ENCODE measurements at regions of chrX and their contacts with region 1.

Region 1: DNA sequence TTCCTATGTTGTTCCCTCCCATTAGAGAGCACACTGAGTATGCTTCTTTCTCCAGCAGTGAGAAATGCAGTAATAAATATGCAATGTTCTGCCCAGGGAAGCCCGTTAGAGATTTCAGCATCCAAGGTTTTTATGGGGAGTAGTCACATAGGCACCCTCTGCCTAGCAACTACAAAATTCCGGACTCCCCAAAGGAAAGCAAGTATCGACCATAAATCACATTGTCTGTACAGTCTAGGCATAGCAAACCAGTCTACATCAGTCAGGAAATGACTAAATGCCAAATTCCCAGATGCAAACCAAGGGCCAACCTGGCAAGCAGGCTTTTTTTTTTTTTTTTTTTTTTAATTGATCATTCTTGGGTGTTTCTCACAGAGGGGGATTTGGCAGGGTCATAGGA is 34.8 kb downstream of the GPR101 start:
- DNase-seq: no peak
- H3K4me3 ChIP-seq: no peak overlapping the region
- H3K27ac ChIP-seq: no peak overlapping the region
- H3K4me1 ChIP-seq: no peaks in the 10 kb centered on the region
- H3K27me3 ChIP-seq: no peaks in the 10 kb centered on the region
- CTCF ChIP-seq: no peak
- POLR2A ChIP-seq: no peak

Region 2: DNA sequence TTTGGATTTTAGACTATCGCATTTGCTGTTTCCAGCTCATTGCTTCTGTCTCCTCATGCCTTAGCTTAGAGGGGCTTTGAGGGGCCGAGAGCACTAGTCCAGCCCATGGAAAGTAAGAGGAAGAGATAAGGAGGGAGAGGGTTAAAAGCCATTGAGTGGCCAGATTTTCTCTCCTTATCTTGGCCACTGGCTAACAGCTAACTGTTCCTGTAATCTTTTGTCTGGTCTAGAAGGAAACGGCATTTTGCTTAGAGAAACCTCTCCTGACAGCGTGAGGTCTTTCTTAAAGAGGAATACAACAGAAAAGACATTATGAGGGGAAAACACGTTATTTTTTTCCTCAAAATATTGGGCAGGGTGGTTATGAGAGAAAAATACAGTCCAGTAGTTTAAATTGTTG is 26.9 kb after region 1 on chrX:
- CTCF ChIA-PET with region 1: no interaction called
- POLR2A ChIA-PET with region 1: no interaction called
- dilution Hi-C with region 1: no loop called
- intact Hi-C with region 1: loop called (anchors 1 kb)
- DNase-seq: no peak
- H3K4me3 ChIP-seq: no peak overlapping the region
- H3K27ac ChIP-seq: no peak overlapping the region
- H3K4me1 ChIP-seq: no peaks in the 10 kb centered on the region
- H3K27me3 ChIP-seq: peaks cover 5% of the 10 kb centered on the region in 2 experiments
- CTCF ChIP-seq: no peak
- POLR2A ChIP-seq: no peak

Measured in endothelial cell of umbilical vein (primary cell).